ENCODE measurements at regions of chr14 and their contacts with region 1.

Region 1: GRCh38 chr14:23327947-23328744 is 6.9 kb downstream of the PABPN1 start:
- DNase-seq: peak; percentile 86
- H3K4me3 ChIP-seq: no peak overlapping the region
- H3K27ac ChIP-seq: no peak overlapping the region
- H3K4me1 ChIP-seq: peaks cover 3 to 4% of the 10 kb centered on the region in 2 experiments; a peak in 3 of 4 replicates
- H3K27me3 ChIP-seq: no peaks in the 10 kb centered on the region
- CTCF ChIP-seq: peak; percentile 93
- EP300 ChIP-seq: no peak
- RAD21 ChIP-seq: peak; percentile 96

Region 2: GRCh38 chr14:23252420-23253333 is 75.5 kb before region 1 on chr14:
- CTCF ChIA-PET with region 1: no interaction called
- POLR2A ChIA-PET with region 1: no interaction called
- DNase-seq: no peak
- H3K4me3 ChIP-seq: no peak overlapping the region
- H3K27ac ChIP-seq: no peak overlapping the region
- H3K4me1 ChIP-seq: no peaks in the 10 kb centered on the region
- H3K27me3 ChIP-seq: peaks cover 41% of the 10 kb centered on the region; the same call in 1 of the 2 replicates
- CTCF ChIP-seq: no peak
- EP300 ChIP-seq: no peak
- RAD21 ChIP-seq: no peak

Region 3: DNA sequence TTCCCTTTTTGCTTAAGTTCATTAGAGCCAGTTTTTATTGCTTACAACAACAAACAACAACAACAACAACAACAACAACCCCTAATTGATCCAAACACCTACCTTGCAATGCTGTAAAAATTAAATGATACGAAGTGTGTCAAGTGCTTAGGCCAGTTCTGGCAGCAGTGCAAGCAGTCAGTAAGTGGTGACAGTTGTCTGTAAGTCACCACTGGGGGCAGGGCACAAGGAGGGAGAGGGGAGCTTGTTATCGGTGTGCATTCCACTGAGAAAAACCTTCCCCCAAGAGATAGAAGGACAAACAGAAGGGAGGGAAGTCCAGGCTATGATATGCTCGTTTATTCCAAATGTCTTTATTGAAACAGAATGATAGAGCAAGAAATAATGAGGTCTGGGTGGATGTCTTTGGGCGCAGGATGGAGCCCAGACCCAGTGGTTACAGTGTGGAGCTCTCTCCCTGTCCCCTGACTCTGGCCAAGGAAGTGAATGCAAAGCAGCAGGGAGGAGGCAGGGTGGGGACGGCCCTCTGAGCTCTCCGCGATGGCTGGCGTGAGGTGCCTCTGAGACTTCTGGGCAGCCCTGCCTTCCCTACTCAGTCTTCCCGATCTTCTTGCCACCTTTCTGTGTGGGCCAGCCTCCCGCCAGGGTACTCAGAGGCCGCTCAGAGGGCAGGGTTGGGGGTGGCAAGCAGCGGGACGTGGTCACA is 18.0 kb after region 1 on chr14:
- CTCF ChIA-PET with region 1: interaction called, 30 read pairs
- POLR2A ChIA-PET with region 1: interaction called, 8 read pairs
- DNase-seq: no peak
- H3K4me3 ChIP-seq: no peak overlapping the region
- H3K27ac ChIP-seq: no peak overlapping the region; a peak in 1 of 4 replicates
- H3K4me1 ChIP-seq: peaks cover 0 to under 1% of the 10 kb centered on the region in 2 experiments; a peak in 1 of 4 replicates
- H3K27me3 ChIP-seq: no peaks in the 10 kb centered on the region
- CTCF ChIP-seq: no peak
- EP300 ChIP-seq: no peak
- RAD21 ChIP-seq: no peak

Region 4: DNA sequence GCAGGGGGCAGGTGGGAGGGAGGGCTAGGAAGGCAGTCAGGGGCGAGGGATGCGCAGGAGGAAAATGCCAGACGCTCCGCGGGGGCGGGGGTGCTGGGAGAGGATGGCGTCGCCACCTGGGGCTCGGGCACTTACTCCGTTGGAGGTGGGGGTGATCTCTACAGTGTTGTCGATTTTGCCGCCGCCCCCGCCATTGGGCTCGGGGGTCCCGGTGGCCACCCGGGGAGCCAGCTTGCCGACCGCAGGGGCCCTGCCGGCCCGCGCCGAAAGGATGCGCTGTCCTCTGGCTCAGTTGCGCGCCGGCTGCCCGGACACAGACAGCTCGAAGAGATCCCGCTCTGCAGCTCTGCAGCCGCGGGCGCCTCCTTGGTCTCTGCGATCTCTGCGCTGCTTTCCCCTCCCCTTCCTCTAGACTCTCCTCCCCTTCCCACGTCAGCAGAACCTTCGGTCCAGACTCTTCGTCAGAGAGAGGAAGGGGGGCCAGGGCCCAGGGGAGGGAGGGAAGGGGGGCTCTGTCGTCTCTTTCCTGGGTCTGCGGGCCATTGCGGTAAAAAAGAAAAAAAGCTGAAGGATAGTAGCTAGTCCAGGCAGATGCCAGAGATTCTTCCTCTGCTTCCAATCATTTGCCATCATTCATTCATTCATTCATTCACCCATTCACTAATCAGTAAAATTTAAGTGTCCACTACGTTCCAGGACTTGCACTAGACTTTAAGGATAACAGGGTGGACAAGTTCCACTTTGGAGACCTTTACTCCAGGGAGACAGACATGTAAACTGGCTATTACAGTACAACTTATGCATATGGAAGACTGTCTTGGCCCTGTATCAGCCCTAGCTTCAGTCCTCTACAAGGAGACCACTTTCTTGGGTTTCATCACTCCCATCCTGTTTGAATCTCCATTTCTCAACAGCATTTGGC is 24.6 kb after region 1 on chr14 and contains the start of gene SLC22A17:
- CTCF ChIA-PET with region 1: interaction called, 30 read pairs
- POLR2A ChIA-PET with region 1: interaction called, 7 read pairs
- DNase-seq: peak; percentile 93
- H3K4me3 ChIP-seq: peak within 1 kb of the TSS; percentile 81 to 82
- H3K27ac ChIP-seq: peak within 1 kb of the TSS; percentile 55 to 92
- H3K4me1 ChIP-seq: peaks cover 0 to 12% of the 10 kb centered on the region in 2 experiments; a peak in 1 of 4 replicates
- H3K27me3 ChIP-seq: no peaks in the 10 kb centered on the region
- CTCF ChIP-seq: no peak
- EP300 ChIP-seq: no peak
- RAD21 ChIP-seq: no peak
- polyA plus RNA-seq, gene SLC22A17: 20.6 and 27.2 TPM in 2 replicates

Region 5: GRCh38 chr14:23360496-23360895 is 32.4 kb after region 1 on chr14:
- CTCF ChIA-PET with region 1: interaction called, 10 read pairs
- POLR2A ChIA-PET with region 1: interaction called, 4 read pairs
- DNase-seq: peak; percentile 63
- H3K4me3 ChIP-seq: no peak overlapping the region
- H3K27ac ChIP-seq: no peak overlapping the region; a peak in 1 of 4 replicates
- H3K4me1 ChIP-seq: peaks cover 0 to 8% of the 10 kb centered on the region in 2 experiments; a peak in 2 of 4 replicates
- H3K27me3 ChIP-seq: no peaks in the 10 kb centered on the region
- CTCF ChIP-seq: no peak
- EP300 ChIP-seq: no peak
- RAD21 ChIP-seq: no peak

Region 6: DNA sequence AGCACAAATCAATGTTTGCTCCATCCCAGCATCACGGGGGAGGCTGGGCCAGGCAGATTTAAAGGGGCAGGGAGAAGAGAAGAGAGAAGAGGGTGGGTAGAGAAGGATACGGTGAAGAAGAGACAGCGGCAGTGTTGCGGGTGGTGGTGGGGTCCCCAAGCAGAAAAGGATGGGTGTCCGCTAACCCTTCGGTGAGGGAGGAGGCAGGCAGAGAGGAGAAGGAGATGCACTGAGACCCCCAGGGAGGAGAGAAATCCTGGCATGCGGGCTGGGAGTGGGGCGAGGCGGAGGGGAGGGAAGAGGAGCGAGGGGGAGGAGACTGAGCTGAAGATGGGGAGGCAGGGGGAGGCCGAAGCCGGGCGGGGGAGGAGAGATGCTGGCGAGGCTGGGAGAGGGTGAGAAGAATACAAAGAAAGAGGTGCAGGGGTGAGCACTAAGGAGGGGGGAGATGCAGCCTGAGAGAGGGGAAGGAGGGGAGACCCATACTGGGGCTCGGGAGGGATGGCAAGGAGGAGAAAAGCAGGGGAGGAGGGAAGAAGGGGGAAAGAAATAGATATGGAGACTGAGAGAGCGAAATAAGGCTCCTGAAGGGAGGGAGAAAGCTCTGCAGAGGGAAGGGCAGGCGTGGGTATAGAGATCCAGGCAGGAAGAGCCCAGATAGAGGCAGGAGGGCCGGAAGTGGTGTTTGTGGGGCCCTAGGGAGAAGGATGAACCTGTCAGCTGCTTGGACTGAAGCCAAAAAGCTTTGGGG is 250.6 kb after region 1 on chr14 and contains the start of gene JPH4:
- CTCF ChIA-PET with region 1: no interaction called
- POLR2A ChIA-PET with region 1: no interaction called
- DNase-seq: peak; percentile 89
- H3K4me3 ChIP-seq: peak within 1 kb of the TSS; percentile 61 to 66
- H3K27ac ChIP-seq: peak within 1 kb of the TSS in 1 of 2 experiments; percentile 94; a peak in 2 of 4 replicates
- H3K4me1 ChIP-seq: peaks cover 0 to 28% of the 10 kb centered on the region in 2 experiments; a peak in 1 of 4 replicates
- H3K27me3 ChIP-seq: no peaks in the 10 kb centered on the region
- CTCF ChIP-seq: no peak
- EP300 ChIP-seq: no peak; a peak in 1 of 4 replicates
- RAD21 ChIP-seq: no peak
- polyA plus RNA-seq, gene JPH4: 8.7 and 8.8 TPM in 2 replicates